MCF 10A (cell line): ENCODE measurements at regions of chr16 and their contacts with region 1.

Region 1: GRCh38 chr16:31052124-31052523 is 18.8 kb downstream of the STX4 start:
- DNase-seq: peak; percentile 89
- H3K4me3 Mint-ChIP-seq: no peak overlapping the region
- H3K27ac Mint-ChIP-seq: peak overlapping the region; percentile 73
- H3K4me1 Mint-ChIP-seq: peaks cover 20% of the 10 kb centered on the region
- H3K27me3 Mint-ChIP-seq: no peaks in the 10 kb centered on the region
- CTCF ChIP-seq: no peak

Region 2: DNA sequence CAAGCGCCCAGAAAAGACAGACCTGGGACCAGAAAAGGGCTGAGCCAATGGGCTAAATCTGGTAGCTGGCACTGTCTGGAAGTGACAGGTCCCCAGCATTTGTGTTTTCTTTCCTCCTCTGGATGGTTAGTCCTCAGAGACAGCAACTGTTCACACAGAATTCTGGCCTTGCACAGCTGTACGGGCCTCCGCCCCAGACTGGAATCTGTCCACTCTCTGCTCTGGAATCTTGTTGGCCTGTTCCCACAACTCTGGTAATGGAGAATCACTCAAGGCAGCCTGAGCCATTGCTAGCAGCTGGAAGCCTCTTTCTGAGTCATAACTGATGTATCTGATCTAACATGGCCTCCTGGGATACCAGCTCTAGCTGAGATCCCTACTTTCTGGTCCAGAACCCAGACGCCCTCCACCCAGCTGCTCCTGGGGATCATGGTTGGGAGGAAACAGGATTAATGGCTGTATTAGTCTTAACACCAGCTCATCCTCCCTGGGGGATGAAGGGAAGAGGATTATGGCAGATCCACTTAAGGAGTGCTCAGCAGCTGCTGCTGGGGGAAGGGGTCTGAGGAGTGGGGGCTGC is 12.8 kb after region 1 on chr16:
- CTCF ChIA-PET with region 1: interaction called, 3 read pairs
- POLR2A ChIA-PET with region 1: interaction called, 10 read pairs
- intact Hi-C with region 1: loop called (anchors 1 kb)
- DNase-seq: peak; percentile 51
- H3K4me3 Mint-ChIP-seq: peak overlapping the region; percentile 38
- H3K27ac Mint-ChIP-seq: peak overlapping the region; percentile 94
- H3K4me1 Mint-ChIP-seq: peaks cover 22% of the 10 kb centered on the region
- H3K27me3 Mint-ChIP-seq: no peaks in the 10 kb centered on the region
- CTCF ChIP-seq: no peak